Endothelial cell of umbilical vein (primary cell): ENCODE measurements at regions of chr1 and their contacts with region 1.

Region 1: DNA sequence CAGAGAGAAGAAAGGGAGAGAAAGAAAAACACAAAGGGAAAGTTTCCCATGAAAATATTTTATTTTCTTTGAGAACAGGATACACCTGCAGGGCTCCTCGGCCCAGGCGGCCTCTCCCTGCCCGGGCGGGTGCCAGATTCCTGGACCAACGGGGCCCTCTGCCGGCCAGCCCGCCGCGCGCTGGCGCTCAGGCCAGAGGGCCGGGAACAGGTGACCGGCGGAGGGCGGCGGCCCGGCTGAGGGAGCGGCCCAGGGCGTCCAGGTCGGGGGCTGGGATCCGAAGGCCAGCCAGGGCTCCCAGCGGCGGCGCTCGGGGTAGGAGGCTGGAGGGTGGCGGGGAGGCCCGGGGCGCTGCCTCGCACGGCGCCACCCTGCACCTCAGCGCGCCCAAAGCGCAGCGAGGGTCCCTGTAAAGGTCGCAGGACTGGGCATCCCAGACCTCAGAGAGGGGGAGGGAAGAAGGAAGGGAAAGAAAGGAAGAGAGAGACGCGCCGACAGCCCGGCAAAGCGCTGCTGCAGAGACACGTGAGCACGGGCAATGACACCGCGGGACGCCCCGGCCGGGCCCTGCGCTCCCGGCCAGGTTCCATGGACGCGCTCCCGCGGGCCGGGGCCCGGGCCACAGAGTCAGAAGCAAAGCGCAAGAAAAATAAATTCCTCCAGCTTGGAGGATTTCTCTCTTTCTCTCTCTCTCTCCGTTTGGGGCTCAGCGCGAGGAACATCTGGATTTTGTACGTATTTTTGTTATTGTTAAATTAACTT is 927 bp downstream of the WNT9A start:
- DNase-seq: no peak
- H3K4me3 ChIP-seq: peak overlapping the region in 2 of 3 experiments; percentile 44 to 63
- H3K27ac ChIP-seq: no peak overlapping the region
- H3K4me1 ChIP-seq: peaks cover 16% of the 10 kb centered on the region
- H3K27me3 ChIP-seq: peaks cover 3 to 5% of the 10 kb centered on the region in 2 experiments
- CTCF ChIP-seq: peak; percentile 68 to 73
- POLR2A ChIP-seq: no peak

Region 2: DNA sequence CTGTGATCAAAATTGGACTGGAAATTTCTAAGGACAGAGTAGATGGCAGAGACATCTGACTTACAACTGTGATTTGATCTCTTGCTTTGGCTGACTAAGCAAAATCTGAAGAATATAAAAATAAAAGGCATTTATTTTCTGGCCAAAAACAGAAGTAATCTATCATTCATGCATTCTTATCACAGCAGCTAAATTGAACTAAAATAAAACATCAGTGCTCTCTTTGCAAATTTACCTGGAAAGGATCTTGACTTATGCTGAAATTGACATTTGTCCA is 464.8 kb before region 1 on chr1:
- CTCF ChIA-PET with region 1: interaction called, 18 read pairs
- POLR2A ChIA-PET with region 1: no interaction called
- dilution Hi-C with region 1: no loop called
- intact Hi-C with region 1: loop called (anchors 1 kb)
- DNase-seq: no peak
- H3K4me3 ChIP-seq: no peak overlapping the region
- H3K27ac ChIP-seq: no peak overlapping the region
- H3K4me1 ChIP-seq: no peaks in the 10 kb centered on the region
- H3K27me3 ChIP-seq: peaks cover 2 to 28% of the 10 kb centered on the region in 2 experiments
- CTCF ChIP-seq: no peak
- POLR2A ChIP-seq: no peak

Region 3: DNA sequence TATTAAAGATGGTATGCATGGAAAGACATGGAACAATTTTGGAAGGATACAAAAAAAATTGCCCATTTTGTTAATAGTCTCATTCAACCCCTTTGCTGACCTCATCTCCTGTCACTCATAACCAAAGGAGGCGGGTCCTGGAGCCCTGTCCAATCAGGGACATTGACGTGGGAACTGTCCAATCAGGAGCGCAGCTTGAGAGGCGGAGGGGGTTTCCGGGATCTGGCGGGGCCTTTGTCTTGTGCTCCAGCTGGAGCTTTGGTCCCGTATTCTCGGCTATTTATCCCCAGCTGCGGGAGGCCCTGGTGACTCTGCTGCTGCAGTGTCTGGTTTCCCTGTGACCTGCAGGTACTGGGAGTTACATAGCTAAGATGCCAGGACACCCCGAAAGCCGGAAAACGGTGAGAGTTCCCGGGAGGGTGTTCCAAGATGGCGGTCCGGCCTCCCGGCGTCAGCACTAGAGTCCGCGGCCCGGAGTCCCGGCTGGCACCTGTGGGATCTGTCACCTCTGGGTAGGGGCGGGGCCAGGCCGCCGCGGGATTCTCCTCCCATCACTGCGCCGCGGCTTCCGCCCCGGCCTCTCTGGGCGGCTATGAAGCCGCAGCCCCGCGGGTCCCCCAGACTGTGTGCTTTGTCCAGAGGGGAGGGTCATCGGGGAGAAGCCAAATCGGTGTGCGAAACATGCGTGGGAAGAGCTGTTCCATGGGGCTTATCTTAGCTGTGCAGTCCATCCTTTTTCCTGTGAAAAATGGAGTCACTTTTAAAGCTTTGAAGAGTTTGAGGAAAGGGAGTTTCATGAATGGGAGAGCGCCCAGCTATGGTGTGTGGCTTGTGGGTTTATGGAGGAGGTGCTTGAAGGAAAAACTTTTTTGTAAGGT is 383.2 kb before region 1 on chr1 and contains the start of gene ZNF678:
- CTCF ChIA-PET with region 1: no interaction called
- POLR2A ChIA-PET with region 1: no interaction called
- dilution Hi-C with region 1: no loop called
- intact Hi-C with region 1: loop called (anchors 1 kb)
- DNase-seq: peak; percentile 94
- H3K4me3 ChIP-seq: peak within 1 kb of the TSS; percentile 70 to 90 (median 90)
- H3K27ac ChIP-seq: peak within 1 kb of the TSS; percentile 94
- H3K4me1 ChIP-seq: peaks cover 5% of the 10 kb centered on the region
- H3K27me3 ChIP-seq: peaks cover 19 to 27% of the 10 kb centered on the region in 2 experiments
- CTCF ChIP-seq: no peak
- POLR2A ChIP-seq: peak; percentile 55
- total RNA-seq, gene ZNF678: 7.5 and 7.7 TPM in 2 replicates

Region 4: DNA sequence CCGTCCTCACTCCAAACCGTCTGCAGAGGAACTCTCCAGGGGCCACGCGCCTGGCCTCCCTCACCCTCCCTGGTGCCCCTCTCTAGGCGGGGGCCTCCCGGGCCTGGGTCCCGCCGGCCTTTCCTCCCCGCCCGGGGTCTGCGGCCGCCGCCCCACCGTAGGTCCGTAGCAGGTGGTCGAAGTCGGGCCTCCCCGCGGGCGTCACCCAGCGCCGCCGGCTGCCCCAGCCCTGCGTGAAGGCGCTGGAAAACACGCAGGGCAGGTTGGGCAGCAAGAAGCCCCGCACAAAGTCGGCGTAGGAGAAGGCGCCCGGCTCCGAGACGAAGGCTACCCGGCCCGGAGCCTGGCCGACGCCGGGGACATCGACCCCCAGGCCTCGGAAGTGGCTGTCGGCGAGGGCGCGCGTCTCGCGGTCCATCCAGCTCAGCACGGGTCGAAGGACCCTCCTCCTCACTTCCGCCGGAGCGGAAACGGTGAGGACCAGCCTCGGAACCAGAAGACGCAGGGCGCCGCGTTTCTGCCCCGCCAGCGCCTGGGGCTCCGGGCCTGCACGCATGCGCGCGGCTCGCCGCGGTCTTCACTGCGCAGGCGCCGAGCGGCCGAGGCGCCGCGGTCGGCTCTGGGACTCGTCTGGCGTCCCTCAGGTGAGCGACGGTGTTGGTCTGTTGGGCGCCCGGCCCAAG is 211.8 kb before region 1 on chr1 and contains the starts of genes JMJD4 and SNAP47:
- CTCF ChIA-PET with region 1: interaction called, 8 read pairs
- POLR2A ChIA-PET with region 1: no interaction called
- dilution Hi-C with region 1: no loop called
- intact Hi-C with region 1: loop called (anchors 1 kb)
- DNase-seq: peak; percentile 89
- H3K4me3 ChIP-seq: peak within 1 kb of the TSS; percentile 65 to 89 (median 87)
- H3K27ac ChIP-seq: peak within 1 kb of the TSS; percentile 44
- H3K4me1 ChIP-seq: peaks cover 12% of the 10 kb centered on the region
- H3K27me3 ChIP-seq: no peaks in the 10 kb centered on the region
- CTCF ChIP-seq: no peak
- POLR2A ChIP-seq: peak; percentile 80
- total RNA-seq, gene JMJD4: 15.2 and 17.3 TPM in 2 replicates
- total RNA-seq, gene SNAP47: 24.0 and 25.3 TPM in 2 replicates

Region 5: GRCh38 chr1:227787513-227788270 is 159.1 kb before region 1 on chr1:
- CTCF ChIA-PET with region 1: no interaction called
- POLR2A ChIA-PET with region 1: no interaction called
- dilution Hi-C with region 1: no loop called
- intact Hi-C with region 1: loop called (anchors 1 kb)
- DNase-seq: peak; percentile 92
- H3K4me3 ChIP-seq: peak overlapping the region; percentile 50 to 62 (median 60)
- H3K27ac ChIP-seq: no peak overlapping the region
- H3K4me1 ChIP-seq: peaks cover 9% of the 10 kb centered on the region
- H3K27me3 ChIP-seq: peaks cover 0 to 1% of the 10 kb centered on the region in 2 experiments
- CTCF ChIP-seq: no peak
- POLR2A ChIP-seq: no peak

Region 6: GRCh38 chr1:228082135-228082891 is 135.5 kb after region 1 on chr1 and contains the start of gene ARF1:
- CTCF ChIA-PET with region 1: no interaction called
- POLR2A ChIA-PET with region 1: no interaction called
- dilution Hi-C with region 1: no loop called
- intact Hi-C with region 1: loop called (anchors 2 kb)
- DNase-seq: peak; percentile 94
- H3K4me3 ChIP-seq: peak within 1 kb of the TSS; percentile 51 to 86 (median 73)
- H3K27ac ChIP-seq: peak within 1 kb of the TSS; percentile 94
- H3K4me1 ChIP-seq: peaks cover 39% of the 10 kb centered on the region
- H3K27me3 ChIP-seq: no peaks in the 10 kb centered on the region
- CTCF ChIP-seq: no peak
- POLR2A ChIP-seq: peak; percentile 92
- total RNA-seq, gene ARF1: 488 and 499 TPM in 2 replicates

Region 7: DNA sequence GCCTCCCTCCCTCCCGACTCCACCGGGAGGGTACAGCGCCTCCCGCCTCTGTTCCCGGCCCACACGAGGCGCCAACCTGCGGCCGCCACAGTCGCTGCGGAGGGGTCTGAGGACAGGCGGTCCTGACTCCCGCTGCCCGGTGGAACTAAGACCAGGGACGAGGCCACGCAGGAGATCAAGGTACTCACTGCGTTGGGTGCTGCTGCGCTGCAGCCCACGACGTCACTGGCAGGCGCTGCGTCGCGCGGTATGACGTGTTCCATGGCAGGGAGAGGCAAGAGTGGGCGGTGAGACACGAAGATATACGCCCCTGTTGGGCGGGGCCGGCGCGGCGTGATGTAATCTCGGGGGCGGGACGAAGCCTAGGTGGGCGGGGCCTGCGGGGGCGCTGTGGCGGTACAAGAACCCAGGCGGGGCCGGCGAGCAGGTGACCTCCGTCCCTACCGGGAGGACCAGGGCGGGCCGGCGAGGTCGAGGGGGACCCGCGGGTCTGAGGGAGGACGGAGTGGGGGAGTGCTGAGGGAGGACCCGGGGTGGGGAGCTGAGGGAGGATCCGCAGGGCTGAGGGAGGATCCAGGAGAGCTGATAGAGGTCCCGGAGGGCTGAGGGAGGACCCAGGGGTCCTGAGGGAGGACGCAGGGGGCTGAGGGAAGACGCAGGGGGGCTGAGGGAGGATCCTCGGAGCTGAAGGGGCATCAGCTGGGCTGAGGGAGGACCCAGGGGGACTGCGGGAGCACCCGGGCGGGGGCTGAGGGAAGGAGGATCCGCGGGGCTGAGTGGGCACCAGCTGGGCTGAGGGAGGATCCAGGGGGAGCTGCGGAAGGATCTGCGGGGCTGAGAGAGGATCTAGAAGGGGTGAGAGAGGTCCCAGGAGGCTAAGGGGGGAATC is 162.5 kb after region 1 on chr1 and contains the start of gene MRPL55:
- CTCF ChIA-PET with region 1: no interaction called
- POLR2A ChIA-PET with region 1: no interaction called
- dilution Hi-C with region 1: no loop called
- intact Hi-C with region 1: no loop called
- DNase-seq: peak; percentile 98
- H3K4me3 ChIP-seq: peak within 1 kb of the TSS; percentile 29 to 92 (median 63)
- H3K27ac ChIP-seq: peak within 1 kb of the TSS; percentile 32
- H3K4me1 ChIP-seq: peaks cover 13% of the 10 kb centered on the region
- H3K27me3 ChIP-seq: no peaks in the 10 kb centered on the region
- CTCF ChIP-seq: no peak
- POLR2A ChIP-seq: peak; percentile 82
- total RNA-seq, gene MRPL55: 57.0 and 58.7 TPM in 2 replicates